ENCODE measurements at regions of chr7 and their contacts with region 1.

Region 1: GRCh38 chr7:50679218-50680007 is 103.3 kb downstream of the GRB10 start:
- DNase-seq: no peak
- ATAC-seq: peak; percentile 64 to 78 (median 70)
- H3K4me3 ChIP-seq: no peak overlapping the region
- H3K27ac ChIP-seq: peak overlapping the region in 2 of 10 donors; percentile 10 to 23
- H3K4me1 ChIP-seq: peaks cover 10 to 86% (median 43%) of the 10 kb centered on the region in 9 donors
- H3K27me3 ChIP-seq: no peaks in the 10 kb centered on the region
- CTCF ChIP-seq: peak in 8 of 9 donors; percentile 22 to 64 (median 51)

Region 2: DNA sequence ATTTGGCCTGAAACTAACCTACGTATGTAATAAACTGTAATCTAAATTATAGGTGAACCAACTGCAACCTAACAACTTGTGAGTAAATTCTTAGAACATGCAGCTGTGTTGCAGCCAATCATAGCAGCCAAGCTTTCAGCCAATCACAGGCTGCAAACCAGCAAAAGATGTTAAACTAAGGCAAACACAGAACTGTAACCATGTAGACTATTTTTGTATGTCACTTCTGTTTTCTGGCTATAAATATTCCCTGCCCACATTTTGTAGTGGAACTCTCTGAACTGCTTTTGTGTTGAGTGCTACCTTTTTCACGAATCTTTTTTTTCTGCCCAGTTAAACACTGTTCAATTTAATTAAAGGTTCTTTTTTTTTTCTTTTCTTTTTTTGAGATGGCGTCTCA is 558.1 kb before region 1 on chr7:
- intact Hi-C with region 1: no loop called
- DNase-seq: no peak
- ATAC-seq: no peak
- H3K4me3 ChIP-seq: no peak overlapping the region
- H3K27ac ChIP-seq: no peak overlapping the region
- H3K4me1 ChIP-seq: no peaks in the 10 kb centered on the region
- H3K27me3 ChIP-seq: peaks cover 0 to 11% (median 5%) of the 10 kb centered on the region in 7 donors
- CTCF ChIP-seq: no peak

Region 3: DNA sequence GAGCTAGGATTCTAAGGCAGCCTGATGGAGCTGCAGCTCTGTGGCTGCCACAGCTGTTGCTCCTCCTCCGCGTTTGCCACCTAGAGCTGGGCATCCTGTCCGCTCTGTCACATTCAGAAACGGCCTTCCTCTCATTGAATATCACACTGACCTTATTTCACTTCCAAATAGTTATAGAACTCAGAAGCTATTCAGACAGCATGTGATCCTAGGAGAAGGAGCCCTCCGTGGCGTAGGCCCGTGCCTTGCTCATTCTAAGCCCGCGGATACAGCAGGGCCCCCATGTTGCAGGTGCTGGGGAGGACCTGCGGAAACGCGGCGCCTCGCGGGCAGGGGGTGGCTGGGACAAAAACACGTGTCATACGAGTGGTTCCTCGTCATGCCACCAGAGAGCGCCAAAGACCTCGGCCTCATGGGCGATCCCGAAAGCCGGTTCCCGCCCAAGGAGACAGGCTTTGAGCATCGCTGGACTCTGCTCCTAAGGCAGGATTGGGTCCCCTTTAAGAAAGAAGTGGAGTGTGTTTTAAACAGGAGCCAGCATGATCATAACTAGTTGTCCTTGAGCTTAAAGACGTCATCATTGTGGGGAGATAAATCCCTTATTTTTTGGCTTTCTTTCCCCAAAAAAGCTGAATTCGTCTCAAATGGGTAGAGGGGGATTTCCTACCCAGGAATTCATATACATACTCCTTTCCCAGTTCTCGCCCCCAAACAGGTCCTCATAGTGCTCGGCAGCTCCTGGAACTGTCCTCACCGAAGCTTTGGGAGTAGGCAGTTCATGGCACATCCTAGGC is 211.4 kb before region 1 on chr7:
- intact Hi-C with region 1: loop called (anchors 1 to 10 kb)
- DNase-seq: peak; percentile 80 to 83
- ATAC-seq: peak; percentile 77 to 95 (median 93)
- H3K4me3 ChIP-seq: peak overlapping the region in 2 of 10 donors; percentile 20 to 21
- H3K27ac ChIP-seq: no peak overlapping the region
- H3K4me1 ChIP-seq: peaks cover 0 to 10% (median 0%) of the 10 kb centered on the region in 9 donors
- H3K27me3 ChIP-seq: peaks cover 0 to 7% (median 0%) of the 10 kb centered on the region in 7 donors
- CTCF ChIP-seq: peak; percentile 88 to 95 (median 91)

Region 4: GRCh38 chr7:50610521-50611277 is 68.7 kb before region 1 on chr7:
- intact Hi-C with region 1: loop called in 7 of 10 experiments (anchors 1 to 5 kb)
- DNase-seq: no peak
- ATAC-seq: no peak
- H3K4me3 ChIP-seq: no peak overlapping the region
- H3K27ac ChIP-seq: no peak overlapping the region
- H3K4me1 ChIP-seq: peaks cover 0 to 19% (median 0%) of the 10 kb centered on the region in 9 donors
- H3K27me3 ChIP-seq: no peaks in the 10 kb centered on the region
- CTCF ChIP-seq: no peak

Region 5: GRCh38 chr7:50641442-50642405 is 37.7 kb before region 1 on chr7:
- intact Hi-C with region 1: loop called in 2 of 10 experiments (anchors 5 kb)
- DNase-seq: peak in 1 of 2 donors; percentile 53
- ATAC-seq: peak; percentile 77 to 95 (median 90)
- H3K4me3 ChIP-seq: no peak overlapping the region
- H3K27ac ChIP-seq: peak overlapping the region in 8 of 10 donors; percentile 7 to 79 (median 50)
- H3K4me1 ChIP-seq: peaks cover 4 to 33% (median 17%) of the 10 kb centered on the region in 9 donors
- H3K27me3 ChIP-seq: no peaks in the 10 kb centered on the region
- CTCF ChIP-seq: peak in 8 of 9 donors; percentile 12 to 55 (median 34)

Region 6: GRCh38 chr7:50869108-50869725 is 189.8 kb after region 1 on chr7:
- intact Hi-C with region 1: no loop called
- DNase-seq: peak in 1 of 2 donors; percentile 30
- ATAC-seq: peak in 7 of 8 donors; percentile 45 to 83 (median 72)
- H3K4me3 ChIP-seq: no peak overlapping the region
- H3K27ac ChIP-seq: peak overlapping the region in 1 of 10 donors; percentile 11
- H3K4me1 ChIP-seq: peaks cover 0 to 47% (median 4%) of the 10 kb centered on the region in 9 donors
- H3K27me3 ChIP-seq: no peaks in the 10 kb centered on the region
- CTCF ChIP-seq: no peak

Region 7: GRCh38 chr7:51154201-51154600 is 474.8 kb after region 1 on chr7:
- intact Hi-C with region 1: loop called in 3 of 10 experiments (anchors 10 kb)
- DNase-seq: no peak
- ATAC-seq: peak in 1 of 8 donors; percentile 23
- H3K4me3 ChIP-seq: no peak overlapping the region
- H3K27ac ChIP-seq: no peak overlapping the region
- H3K4me1 ChIP-seq: peaks cover 0 to 15% (median 0%) of the 10 kb centered on the region in 9 donors
- H3K27me3 ChIP-seq: peaks cover 0 to 5% (median 0%) of the 10 kb centered on the region in 7 donors
- CTCF ChIP-seq: no peak

Region 8: GRCh38 chr7:52079726-52080125 is 1400.3 kb after region 1 on chr7:
- intact Hi-C with region 1: loop called in 1 of 10 experiments (anchors 5 kb)
- DNase-seq: no peak
- ATAC-seq: no peak
- H3K4me3 ChIP-seq: no peak overlapping the region
- H3K27ac ChIP-seq: no peak overlapping the region
- H3K4me1 ChIP-seq: no peaks in the 10 kb centered on the region
- H3K27me3 ChIP-seq: no peaks in the 10 kb centered on the region
- CTCF ChIP-seq: no peak

Measured in heart right ventricle (tissue), 16 donors.